ENCODE measurements at regions of chr14 and their contacts with region 1.

Region 1: DNA sequence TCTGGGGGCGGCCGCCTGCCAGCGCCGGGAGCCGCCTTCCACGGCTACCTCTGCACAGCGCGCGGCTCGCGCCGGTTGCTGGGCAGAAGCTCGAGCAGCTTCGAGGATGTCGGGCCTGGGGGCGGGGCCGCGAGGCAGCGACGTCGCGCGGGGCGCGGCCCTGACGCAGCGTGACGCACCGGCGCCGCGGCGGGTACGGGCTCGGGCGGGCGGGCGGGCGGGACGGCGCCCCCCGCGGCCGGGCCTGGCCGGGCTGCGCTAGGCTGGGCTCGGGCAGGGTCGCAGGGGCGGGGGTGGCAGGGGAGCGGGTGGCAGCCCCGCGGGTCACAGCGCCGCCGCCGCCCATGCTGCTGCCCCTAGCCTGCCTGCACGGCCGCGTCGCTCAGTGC is at the start of gene BTBD6:
- DNase-seq: peak; percentile 83 to 91 (median 88)
- ATAC-seq: peak; percentile 94
- H3K4me3 ChIP-seq: peak within 1 kb of the TSS; percentile 73
- H3K4me3 Mint-ChIP-seq: peak within 1 kb of the TSS; percentile 69 to 85 (median 80)
- H3K27ac ChIP-seq: peak within 1 kb of the TSS; percentile 79
- H3K27ac Mint-ChIP-seq: peak within 1 kb of the TSS in 8 of 9 donors; percentile 64 to 89 (median 82)
- H3K4me1 ChIP-seq: peaks cover 12 to 14% of the 10 kb centered on the region in 2 donors
- H3K4me1 Mint-ChIP-seq: peaks cover 17 to 52% (median 31%) of the 10 kb centered on the region in 7 donors
- H3K27me3 ChIP-seq: no peaks in the 10 kb centered on the region
- H3K27me3 Mint-ChIP-seq: no peaks in the 10 kb centered on the region
- total RNA-seq, gene BTBD6: 30.8 to 43.0 (median 40.1) TPM

Region 2: DNA sequence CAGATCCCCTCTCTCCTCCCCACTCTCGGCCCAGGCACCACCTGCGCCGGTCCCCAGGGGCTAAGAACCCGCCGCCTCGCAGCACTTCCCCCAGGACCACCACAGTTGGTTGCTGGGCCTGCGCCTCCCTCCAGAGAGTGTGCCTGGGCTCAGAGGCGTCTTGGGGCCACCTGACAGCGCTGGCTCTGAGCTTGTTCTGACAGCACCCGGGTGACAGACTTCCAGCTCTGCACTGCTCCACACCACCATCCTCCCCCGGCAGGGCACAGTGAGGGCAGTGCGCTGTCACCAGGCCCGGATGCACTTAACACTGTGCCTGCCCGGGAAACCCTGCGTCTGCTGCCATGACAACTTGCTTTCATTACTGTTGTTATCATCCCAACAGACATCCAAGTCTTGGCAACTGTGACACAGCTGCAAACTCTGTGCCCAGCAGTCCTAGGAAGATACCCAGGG is 45.8 kb after region 1 on chr14:
- CTCF ChIA-PET with region 1: no interaction called
- POLR2A ChIA-PET with region 1: interaction called, 3 read pairs
- intact Hi-C with region 1: loop called in 1 of 2 experiments (anchors 10 kb)
- DNase-seq: peak; percentile 50 to 82 (median 74)
- ATAC-seq: peak; percentile 94
- H3K4me3 ChIP-seq: peak overlapping the region; percentile 21
- H3K4me3 Mint-ChIP-seq: peak overlapping the region; percentile 39 to 85 (median 78)
- H3K27ac ChIP-seq: peak overlapping the region; percentile 65
- H3K27ac Mint-ChIP-seq: peak overlapping the region; percentile 89 to 99 (median 96)
- H3K4me1 ChIP-seq: peaks cover 14 to 34% of the 10 kb centered on the region in 2 donors
- H3K4me1 Mint-ChIP-seq: peaks cover 31 to 53% (median 46%) of the 10 kb centered on the region in 7 donors
- H3K27me3 ChIP-seq: no peaks in the 10 kb centered on the region
- H3K27me3 Mint-ChIP-seq: no peaks in the 10 kb centered on the region

Region 3: GRCh38 chr14:105664676-105665075 is 416.3 kb after region 1 on chr14:
- CTCF ChIA-PET with region 1: no interaction called
- POLR2A ChIA-PET with region 1: no interaction called
- intact Hi-C with region 1: no loop called
- DNase-seq: no peak
- ATAC-seq: no peak
- H3K4me3 ChIP-seq: no peak overlapping the region
- H3K4me3 Mint-ChIP-seq: no peak overlapping the region
- H3K27ac ChIP-seq: no peak overlapping the region
- H3K27ac Mint-ChIP-seq: no peak overlapping the region
- H3K4me1 ChIP-seq: no peaks in the 10 kb centered on the region
- H3K4me1 Mint-ChIP-seq: no peaks in the 10 kb centered on the region
- H3K27me3 ChIP-seq: no peaks in the 10 kb centered on the region
- H3K27me3 Mint-ChIP-seq: peaks cover 0 to 15% (median 14%) of the 10 kb centered on the region in 5 donors

Measured in naive thymus-derived CD4-positive, alpha-beta T cell (primary cell).